ENCODE measurements at regions of chr16 and their contacts with region 1.

Region 1: DNA sequence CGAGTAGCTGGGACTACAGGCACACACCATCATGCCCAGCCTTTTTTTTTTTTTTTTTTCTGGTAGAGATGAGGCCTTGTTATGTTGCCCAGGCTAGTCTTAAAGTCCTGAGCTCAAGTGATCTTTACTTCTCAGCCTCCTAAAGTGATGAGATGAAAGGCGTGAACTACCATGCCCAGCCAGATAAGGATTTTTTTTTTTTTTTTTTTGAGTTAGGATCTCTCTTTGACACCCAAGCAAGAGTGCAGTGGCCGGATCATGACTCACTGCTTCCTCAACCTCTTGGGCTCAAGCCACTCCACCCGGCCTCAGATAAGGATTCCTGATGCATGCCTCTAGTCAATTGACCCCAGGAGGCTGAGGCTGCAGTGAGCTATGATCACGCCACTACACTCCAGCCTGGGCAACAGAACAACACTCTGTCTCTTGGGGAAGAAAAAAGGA is 11.2 kb upstream of the PLEKHG4 start:
- DNase-seq: peak; percentile 83 to 87
- H3K4me3 ChIP-seq: no peak overlapping the region
- H3K27ac ChIP-seq: no peak overlapping the region
- H3K4me1 ChIP-seq: peaks cover 18% of the 10 kb centered on the region
- H3K27me3 ChIP-seq: no peaks in the 10 kb centered on the region
- CTCF ChIP-seq: no peak

Region 2: DNA sequence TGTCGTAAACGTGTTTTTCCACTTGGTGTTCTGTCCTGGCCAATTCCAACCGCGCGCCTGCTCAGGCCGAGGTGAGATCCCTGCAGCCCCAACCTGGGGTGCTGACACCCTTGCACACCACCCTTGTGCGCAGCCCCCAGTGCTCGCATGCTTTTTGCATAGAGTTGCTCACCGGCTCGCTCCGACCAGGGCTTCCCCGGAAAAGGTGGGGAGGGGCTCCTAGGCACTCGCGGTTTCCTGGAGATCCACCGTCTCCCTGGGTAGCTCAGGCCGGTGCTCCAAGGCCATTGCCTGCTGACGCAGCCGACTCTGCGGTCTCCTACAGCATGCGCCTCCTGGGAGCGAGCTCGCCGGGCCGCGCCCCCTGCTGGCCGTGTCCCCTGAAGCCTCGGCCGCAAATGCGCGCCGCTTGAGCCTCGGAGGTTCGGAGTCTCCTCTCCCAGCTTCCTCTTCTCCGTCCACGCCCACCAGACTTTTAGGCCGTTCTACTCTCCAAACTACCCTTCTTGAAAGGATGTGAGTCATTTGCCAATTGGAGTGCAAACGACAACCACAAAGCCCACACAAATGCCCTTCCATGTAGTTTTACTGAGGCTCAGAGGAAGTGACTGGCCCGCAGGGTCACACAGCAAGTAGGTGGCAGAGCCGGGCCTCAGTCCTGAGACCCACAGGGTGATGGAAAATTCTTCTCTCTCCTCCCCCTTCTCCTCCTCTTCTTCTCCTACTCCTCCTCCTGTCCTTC is 395.0 kb before region 1 on chr16:
- CTCF ChIA-PET with region 1: no interaction called
- POLR2A ChIA-PET with region 1: interaction called, 20 read pairs
- intact Hi-C with region 1: no loop called
- DNase-seq: peak; percentile 90 to 93
- H3K4me3 ChIP-seq: peak overlapping the region; percentile 64
- H3K27ac ChIP-seq: peak overlapping the region; percentile 42
- H3K4me1 ChIP-seq: peaks cover 7% of the 10 kb centered on the region
- H3K27me3 ChIP-seq: no peaks in the 10 kb centered on the region
- CTCF ChIP-seq: peak; percentile 91

Region 3: GRCh38 chr16:67294171-67294757 is 26.1 kb after region 1 on chr16:
- CTCF ChIA-PET with region 1: interaction called, 10 read pairs
- POLR2A ChIA-PET with region 1: no interaction called
- intact Hi-C with region 1: no loop called
- DNase-seq: no peak
- H3K4me3 ChIP-seq: no peak overlapping the region
- H3K27ac ChIP-seq: no peak overlapping the region
- H3K4me1 ChIP-seq: peaks cover 20% of the 10 kb centered on the region
- H3K27me3 ChIP-seq: no peaks in the 10 kb centered on the region
- CTCF ChIP-seq: no peak

Region 4: DNA sequence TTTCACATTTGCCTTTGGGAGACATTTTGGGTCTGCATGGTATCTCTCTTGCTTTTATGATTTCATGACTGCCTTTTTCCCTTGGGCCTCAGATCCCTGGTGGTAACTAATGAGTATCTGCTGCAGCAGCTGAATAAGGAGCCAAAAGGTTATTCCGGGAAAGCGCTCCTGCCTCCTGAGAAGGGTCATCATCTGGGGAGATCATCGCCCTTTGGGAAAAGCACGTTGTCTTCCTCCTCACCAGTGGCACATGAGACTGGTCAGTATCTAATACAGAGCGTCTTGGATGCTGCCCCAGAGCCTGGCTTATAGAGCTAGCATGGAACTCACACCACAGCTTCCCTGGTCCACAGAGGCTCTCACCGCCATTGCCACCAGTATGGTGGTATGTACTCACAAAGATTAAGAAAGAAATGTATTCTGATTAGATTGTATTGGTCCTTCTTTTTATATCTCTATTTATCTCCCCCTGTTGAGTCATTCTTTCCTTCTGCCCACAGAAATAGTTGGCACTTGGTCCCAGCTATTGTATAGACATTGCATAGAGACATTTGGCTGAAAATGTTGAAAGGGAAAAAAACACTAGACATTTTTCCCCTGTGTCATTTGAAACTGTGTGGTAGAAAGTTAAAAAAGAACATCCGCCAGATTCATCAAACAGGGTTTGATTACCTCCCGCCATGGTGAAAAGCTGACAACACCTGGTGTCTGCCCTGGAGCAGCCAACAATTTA is 116.8 kb after region 1 on chr16:
- CTCF ChIA-PET with region 1: no interaction called
- POLR2A ChIA-PET with region 1: interaction called, 12 read pairs
- intact Hi-C with region 1: no loop called
- DNase-seq: no peak
- H3K4me3 ChIP-seq: no peak overlapping the region
- H3K27ac ChIP-seq: no peak overlapping the region
- H3K4me1 ChIP-seq: no peaks in the 10 kb centered on the region
- H3K27me3 ChIP-seq: no peaks in the 10 kb centered on the region
- CTCF ChIP-seq: no peak

Region 5: DNA sequence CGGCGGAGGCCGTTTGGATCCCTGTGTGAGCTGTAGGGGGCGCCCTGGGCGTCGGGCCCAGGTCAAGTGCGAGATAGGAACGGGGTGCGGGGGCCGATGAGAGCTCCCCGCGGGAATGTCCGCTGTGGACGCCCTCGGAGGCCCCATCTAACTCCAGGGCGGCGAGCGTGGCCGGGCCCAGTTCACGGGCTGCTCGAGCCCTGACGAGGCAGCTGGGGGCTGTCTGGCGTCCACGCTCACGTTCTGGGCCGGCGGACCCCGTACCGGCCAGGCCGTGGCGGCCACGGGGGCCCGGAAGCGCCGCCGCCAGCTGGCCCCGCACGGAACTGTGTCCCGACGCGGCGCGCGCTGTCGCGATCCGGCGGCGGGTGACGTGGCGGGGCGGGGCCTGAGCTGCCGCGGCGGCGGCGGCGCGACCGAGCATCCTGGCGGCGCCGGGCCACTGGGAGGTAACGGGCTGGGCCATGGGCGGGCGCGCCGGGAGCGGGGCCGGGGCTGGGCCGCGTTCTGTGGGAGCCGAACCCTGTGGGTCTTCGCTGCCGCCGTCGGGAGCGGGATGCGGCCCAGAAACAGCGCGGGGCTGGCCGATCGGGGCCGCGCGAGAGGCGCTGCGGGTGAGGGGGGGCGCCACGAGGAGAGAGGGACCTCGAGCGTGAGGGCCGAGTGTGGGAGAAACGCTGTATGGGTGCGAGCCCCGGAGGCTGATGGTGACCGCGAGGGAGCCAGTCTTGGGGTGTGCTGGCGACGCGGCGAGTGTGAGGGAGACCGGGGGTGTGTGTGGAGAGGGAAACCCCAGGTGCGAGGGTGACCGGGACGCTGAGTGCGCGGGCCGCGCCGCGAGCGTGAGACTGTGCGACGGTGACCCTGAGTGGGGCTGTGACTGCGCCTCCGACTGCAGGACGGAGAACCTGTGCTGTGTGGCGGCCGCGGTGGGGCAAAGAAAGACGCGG is 996.2 kb after region 1 on chr16 and contains the start of gene SLC7A6:
- CTCF ChIA-PET with region 1: interaction called, 11 read pairs
- POLR2A ChIA-PET with region 1: no interaction called
- intact Hi-C with region 1: no loop called
- DNase-seq: peak; percentile 43 to 77
- H3K4me3 ChIP-seq: peak within 1 kb of the TSS; percentile 86
- H3K27ac ChIP-seq: peak within 1 kb of the TSS; percentile 89
- H3K4me1 ChIP-seq: peaks cover 34% of the 10 kb centered on the region
- H3K27me3 ChIP-seq: no peaks in the 10 kb centered on the region
- CTCF ChIP-seq: peak; percentile 76
- total RNA-seq, gene SLC7A6: 28.6 and 44.7 TPM in 2 replicates